PC-9 (cell line): ENCODE measurements at regions of chr1 and their contacts with region 1.

Region 1: GRCh38 chr1:208541225-208541855 is 297.2 kb upstream of the PLXNA2 start:
- DNase-seq: no peak
- H3K4me3 ChIP-seq: no peak overlapping the region
- H3K27ac ChIP-seq: no peak overlapping the region
- H3K4me1 ChIP-seq: no peaks in the 10 kb centered on the region
- H3K27me3 ChIP-seq: peaks cover 62% of the 10 kb centered on the region
- CTCF ChIP-seq: no peak

Region 2: GRCh38 chr1:208485512-208485911 is 55.8 kb before region 1 on chr1:
- CTCF ChIA-PET with region 1: no interaction called
- POLR2A ChIA-PET with region 1: no interaction called
- intact Hi-C with region 1: loop called (anchors 10 kb)
- DNase-seq: no peak
- H3K4me3 ChIP-seq: no peak overlapping the region
- H3K27ac ChIP-seq: no peak overlapping the region
- H3K4me1 ChIP-seq: no peaks in the 10 kb centered on the region
- H3K27me3 ChIP-seq: peaks cover 9% of the 10 kb centered on the region; the same call in 1 of the 2 replicates
- CTCF ChIP-seq: no peak